GM12878 (cell line): ENCODE measurements at regions of chr3 and their contacts with region 1.

Region 1: GRCh38 chr3:53709860-53710674 is 136.2 kb downstream of the CHDH start:
- DNase-seq: no peak
- ATAC-seq: peak; percentile 96
- H3K4me3 ChIP-seq: no peak overlapping the region
- H3K27ac ChIP-seq: no peak overlapping the region
- H3K4me1 ChIP-seq: no peaks in the 10 kb centered on the region; the same call in 1 of the 2 replicates
- H3K27me3 ChIP-seq: no peaks in the 10 kb centered on the region
- CTCF ChIP-seq: peak; percentile 81 to 91 (median 82)
- EP300 ChIP-seq: no peak
- POLR2A ChIP-seq: no peak
- RAD21 ChIP-seq: peak; percentile 78

Region 2: DNA sequence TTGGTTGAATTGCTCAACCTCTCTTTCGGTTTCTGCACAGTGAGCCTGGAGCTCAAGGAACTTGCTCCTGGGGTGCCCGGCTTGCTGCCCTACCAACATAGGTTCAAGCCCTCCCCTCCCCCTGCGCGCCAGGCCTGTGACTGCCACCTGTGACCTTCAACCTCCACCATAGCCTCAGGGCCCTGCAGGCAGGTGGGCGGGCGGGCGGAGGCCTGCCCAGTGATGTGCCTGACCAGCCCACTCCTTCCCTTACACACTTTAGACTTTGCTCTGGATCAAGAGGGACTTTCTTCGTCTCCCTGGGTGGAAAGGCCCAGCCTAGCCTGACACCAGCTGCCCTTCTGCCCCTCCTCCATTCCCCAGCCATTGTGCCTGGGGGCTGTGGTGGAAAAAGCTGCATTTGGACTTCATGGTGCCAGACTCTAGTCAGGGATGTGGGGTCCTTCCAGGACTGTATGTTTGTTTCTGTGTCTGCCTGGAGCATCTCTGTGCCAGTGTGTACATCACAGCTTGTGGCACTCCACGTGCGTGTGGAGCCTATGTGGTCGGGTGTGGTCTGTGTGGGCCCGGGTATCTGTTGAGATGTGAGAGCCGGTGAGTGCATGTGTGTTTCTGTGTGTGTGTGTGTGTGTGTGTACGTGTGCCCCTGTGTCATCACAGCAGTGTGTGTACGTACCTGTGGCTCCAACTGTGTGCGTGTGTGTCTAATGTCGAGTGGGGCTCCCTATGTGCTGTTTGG is 539.6 kb before region 1 on chr3:
- CTCF ChIA-PET with region 1: no interaction called
- POLR2A ChIA-PET with region 1: no interaction called
- RAD21 ChIA-PET with region 1: no interaction called
- SMC1A ChIA-PET with region 1: no interaction called
- in situ Hi-C with region 1: no loop called
- intact Hi-C with region 1: no loop called
- DNase-seq: peak; percentile 66
- ATAC-seq: peak; percentile 67
- H3K4me3 ChIP-seq: peak overlapping the region; percentile 74
- H3K27ac ChIP-seq: peak overlapping the region; percentile 81
- H3K4me1 ChIP-seq: peaks cover 98% of the 10 kb centered on the region
- H3K27me3 ChIP-seq: no peaks in the 10 kb centered on the region
- CTCF ChIP-seq: no peak
- EP300 ChIP-seq: peak in 1 of 2 experiments; percentile 3; a peak in 1 of 4 replicates
- POLR2A ChIP-seq: peak; percentile 22; the same call in 1 of the 2 replicates
- RAD21 ChIP-seq: no peak

Region 3: GRCh38 chr3:53303957-53304356 is 406.1 kb before region 1 on chr3:
- CTCF ChIA-PET with region 1: interaction called, 5 read pairs
- POLR2A ChIA-PET with region 1: no interaction called
- RAD21 ChIA-PET with region 1: interaction called, 3 read pairs
- SMC1A ChIA-PET with region 1: interaction called, 3 read pairs
- in situ Hi-C with region 1: no loop called
- intact Hi-C with region 1: loop called (anchors 1 kb)
- DNase-seq: no peak
- ATAC-seq: no peak
- H3K4me3 ChIP-seq: no peak overlapping the region
- H3K27ac ChIP-seq: no peak overlapping the region
- H3K4me1 ChIP-seq: no peaks in the 10 kb centered on the region
- H3K27me3 ChIP-seq: no peaks in the 10 kb centered on the region
- CTCF ChIP-seq: no peak
- EP300 ChIP-seq: no peak
- POLR2A ChIP-seq: no peak
- RAD21 ChIP-seq: no peak

Region 4: DNA sequence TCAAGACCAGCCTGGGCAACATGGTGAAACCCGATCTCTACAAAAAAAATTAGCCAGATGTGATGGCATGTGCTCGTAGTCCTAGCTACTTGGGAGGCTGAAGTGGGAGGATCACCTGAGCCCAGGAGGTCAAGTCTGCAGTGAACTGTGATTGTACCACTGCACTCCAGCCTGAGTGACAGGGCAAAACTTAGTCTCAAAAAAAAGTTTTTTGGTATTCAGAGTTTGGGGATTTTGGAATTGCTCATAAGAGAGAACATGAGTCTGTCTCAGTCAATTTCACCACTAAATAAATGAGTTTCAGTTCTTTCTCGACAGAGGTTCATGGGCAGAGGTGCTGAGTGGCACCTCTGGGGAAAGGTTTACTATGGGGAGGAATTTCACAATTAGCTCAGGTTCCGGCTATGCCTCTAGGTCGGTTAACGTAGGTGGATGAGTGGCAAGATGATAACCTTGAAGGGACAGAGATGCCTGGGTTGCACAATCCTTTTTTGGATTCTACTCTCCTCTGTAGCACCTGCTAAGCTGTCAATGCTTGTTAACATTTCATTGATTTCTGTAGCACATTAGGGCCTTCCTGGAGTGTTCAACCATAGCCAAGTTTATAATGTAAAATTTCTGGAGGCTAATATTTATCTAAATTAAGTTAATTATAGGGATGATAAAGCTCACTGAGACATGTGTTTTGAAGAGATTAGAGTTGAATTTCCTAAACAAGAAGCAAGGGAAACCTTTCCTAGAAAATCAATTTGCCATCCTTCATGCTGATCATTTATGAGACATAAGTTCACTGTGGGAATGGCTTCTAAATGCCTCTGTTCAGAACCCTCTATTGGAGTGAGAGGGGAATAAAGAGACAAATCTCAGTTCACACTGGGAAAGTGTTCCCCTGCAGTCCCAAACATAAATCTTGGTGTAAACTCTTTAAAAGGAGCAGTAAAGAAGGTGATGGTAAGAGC is 325.3 kb before region 1 on chr3:
- CTCF ChIA-PET with region 1: interaction called, 10 read pairs
- POLR2A ChIA-PET with region 1: no interaction called
- RAD21 ChIA-PET with region 1: interaction called, 9 read pairs
- SMC1A ChIA-PET with region 1: interaction called, 5 read pairs
- in situ Hi-C with region 1: no loop called
- intact Hi-C with region 1: no loop called
- DNase-seq: peak; percentile 33
- ATAC-seq: peak; percentile 92
- H3K4me3 ChIP-seq: no peak overlapping the region
- H3K27ac ChIP-seq: no peak overlapping the region
- H3K4me1 ChIP-seq: no peaks in the 10 kb centered on the region
- H3K27me3 ChIP-seq: no peaks in the 10 kb centered on the region
- CTCF ChIP-seq: no peak
- EP300 ChIP-seq: peak in 1 of 2 experiments; percentile 10; a peak in 1 of 4 replicates
- POLR2A ChIP-seq: no peak
- RAD21 ChIP-seq: no peak

Region 5: GRCh38 chr3:53525765-53526703 is 184.0 kb before region 1 on chr3:
- CTCF ChIA-PET with region 1: interaction called, 13 read pairs
- POLR2A ChIA-PET with region 1: no interaction called
- RAD21 ChIA-PET with region 1: no interaction called
- SMC1A ChIA-PET with region 1: interaction called, 3 read pairs
- in situ Hi-C with region 1: no loop called
- intact Hi-C with region 1: loop called (anchors 5 kb)
- DNase-seq: no peak
- ATAC-seq: no peak
- H3K4me3 ChIP-seq: no peak overlapping the region
- H3K27ac ChIP-seq: no peak overlapping the region
- H3K4me1 ChIP-seq: no peaks in the 10 kb centered on the region
- H3K27me3 ChIP-seq: no peaks in the 10 kb centered on the region; a peak in 2 of 4 replicates
- CTCF ChIP-seq: no peak
- EP300 ChIP-seq: no peak
- POLR2A ChIP-seq: no peak
- RAD21 ChIP-seq: no peak

Region 6: DNA sequence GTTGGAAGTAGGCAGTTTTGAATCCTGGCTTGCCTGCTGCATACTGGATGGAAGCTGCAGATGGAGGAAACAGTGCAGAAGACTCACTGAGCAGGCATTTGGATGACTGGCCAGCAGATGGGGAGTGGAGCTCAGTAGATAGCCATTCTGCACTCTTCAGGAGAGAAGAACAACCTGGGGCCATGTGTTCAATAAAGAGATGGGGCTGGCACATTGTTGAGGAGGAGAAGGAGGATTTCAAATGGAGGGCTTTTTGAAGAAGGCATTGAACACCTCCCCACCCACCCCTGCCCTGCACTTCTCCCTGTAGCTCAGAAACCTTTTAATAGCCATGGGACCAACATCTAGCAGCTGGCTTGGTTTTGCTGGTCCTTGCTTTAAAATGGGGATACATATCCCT is 105.8 kb before region 1 on chr3:
- CTCF ChIA-PET with region 1: interaction called, 9 read pairs
- POLR2A ChIA-PET with region 1: no interaction called
- RAD21 ChIA-PET with region 1: no interaction called
- SMC1A ChIA-PET with region 1: interaction called, 3 read pairs
- in situ Hi-C with region 1: no loop called
- intact Hi-C with region 1: loop called (anchors 10 kb)
- DNase-seq: no peak
- ATAC-seq: no peak
- H3K4me3 ChIP-seq: no peak overlapping the region
- H3K27ac ChIP-seq: no peak overlapping the region
- H3K4me1 ChIP-seq: no peaks in the 10 kb centered on the region
- H3K27me3 ChIP-seq: no peaks in the 10 kb centered on the region
- CTCF ChIP-seq: 0 out of 6 replicates have a peak, but pooled peaks of 1 of the 3 experiments have one; percentile 5
- EP300 ChIP-seq: no peak
- POLR2A ChIP-seq: no peak
- RAD21 ChIP-seq: no peak

Region 7: GRCh38 chr3:53643757-53644156 is 66.3 kb before region 1 on chr3:
- CTCF ChIA-PET with region 1: interaction called, 18 read pairs
- POLR2A ChIA-PET with region 1: no interaction called
- RAD21 ChIA-PET with region 1: interaction called, 4 read pairs
- SMC1A ChIA-PET with region 1: interaction called, 8 read pairs
- in situ Hi-C with region 1: no loop called
- intact Hi-C with region 1: no loop called
- DNase-seq: no peak
- ATAC-seq: no peak
- H3K4me3 ChIP-seq: no peak overlapping the region
- H3K27ac ChIP-seq: no peak overlapping the region
- H3K4me1 ChIP-seq: no peaks in the 10 kb centered on the region
- H3K27me3 ChIP-seq: no peaks in the 10 kb centered on the region
- CTCF ChIP-seq: peak in 1 of 3 experiments; percentile 14; a peak in 1 of 6 replicates
- EP300 ChIP-seq: no peak
- POLR2A ChIP-seq: no peak
- RAD21 ChIP-seq: no peak

Region 8: GRCh38 chr3:53677413-53677812 is 32.7 kb before region 1 on chr3:
- CTCF ChIA-PET with region 1: interaction called, 10 read pairs
- POLR2A ChIA-PET with region 1: no interaction called
- RAD21 ChIA-PET with region 1: interaction called, 5 read pairs
- SMC1A ChIA-PET with region 1: interaction called, 14 read pairs
- in situ Hi-C with region 1: no loop called
- intact Hi-C with region 1: no loop called
- DNase-seq: no peak
- ATAC-seq: peak; percentile 35; the same call in 1 of the 3 replicates
- H3K4me3 ChIP-seq: no peak overlapping the region
- H3K27ac ChIP-seq: no peak overlapping the region
- H3K4me1 ChIP-seq: no peaks in the 10 kb centered on the region
- H3K27me3 ChIP-seq: no peaks in the 10 kb centered on the region
- CTCF ChIP-seq: peak; percentile 11 to 38 (median 34); a peak in 5 of 6 replicates
- EP300 ChIP-seq: no peak
- POLR2A ChIP-seq: no peak
- RAD21 ChIP-seq: 0 out of 2 replicates have a peak, but pooled peaks have one; percentile 6

Region 9: GRCh38 chr3:53816425-53816824 is 106.4 kb after region 1 on chr3:
- CTCF ChIA-PET with region 1: no interaction called
- POLR2A ChIA-PET with region 1: no interaction called
- RAD21 ChIA-PET with region 1: no interaction called
- SMC1A ChIA-PET with region 1: no interaction called
- in situ Hi-C with region 1: no loop called
- intact Hi-C with region 1: no loop called
- DNase-seq: no peak
- ATAC-seq: no peak
- H3K4me3 ChIP-seq: no peak overlapping the region
- H3K27ac ChIP-seq: no peak overlapping the region
- H3K4me1 ChIP-seq: no peaks in the 10 kb centered on the region
- H3K27me3 ChIP-seq: no peaks in the 10 kb centered on the region
- CTCF ChIP-seq: no peak
- EP300 ChIP-seq: no peak
- POLR2A ChIP-seq: no peak
- RAD21 ChIP-seq: no peak

Region 10: DNA sequence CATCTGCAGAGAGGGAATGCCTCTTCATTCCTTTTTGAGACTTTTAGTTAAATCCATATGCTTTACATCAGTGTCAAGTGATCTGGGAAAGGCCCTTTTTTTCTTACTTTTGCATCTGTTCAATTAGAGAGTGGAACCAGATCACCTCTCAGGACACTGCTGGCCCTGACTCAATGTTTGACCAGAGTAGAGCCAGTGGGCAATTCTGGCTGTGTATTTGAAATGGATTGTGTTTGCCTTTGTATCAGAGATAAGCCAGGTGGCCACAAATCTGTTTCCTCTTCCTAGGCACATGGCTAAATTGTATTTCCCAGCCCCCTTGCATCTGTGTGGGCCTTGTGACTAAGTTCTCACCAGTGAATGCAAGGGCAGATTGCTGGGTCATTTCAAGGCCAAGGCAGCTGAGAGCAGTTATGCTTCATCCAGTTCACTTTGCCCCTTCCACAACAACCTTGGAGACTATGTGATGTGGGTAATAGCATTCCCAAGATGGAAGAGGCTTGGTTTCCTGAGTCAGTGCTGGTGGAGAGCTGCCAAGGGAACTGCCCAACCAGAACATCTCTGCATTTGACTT is 336.7 kb after region 1 on chr3:
- CTCF ChIA-PET with region 1: no interaction called
- POLR2A ChIA-PET with region 1: no interaction called
- RAD21 ChIA-PET with region 1: no interaction called
- SMC1A ChIA-PET with region 1: no interaction called
- in situ Hi-C with region 1: no loop called
- intact Hi-C with region 1: no loop called
- DNase-seq: no peak
- ATAC-seq: no peak
- H3K4me3 ChIP-seq: no peak overlapping the region
- H3K27ac ChIP-seq: no peak overlapping the region
- H3K4me1 ChIP-seq: no peaks in the 10 kb centered on the region
- H3K27me3 ChIP-seq: no peaks in the 10 kb centered on the region; a peak in 1 of 4 replicates
- CTCF ChIP-seq: no peak
- EP300 ChIP-seq: no peak
- POLR2A ChIP-seq: no peak
- RAD21 ChIP-seq: no peak

Region 11: GRCh38 chr3:54494209-54494608 is 784.1 kb after region 1 on chr3:
- CTCF ChIA-PET with region 1: no interaction called
- POLR2A ChIA-PET with region 1: no interaction called
- RAD21 ChIA-PET with region 1: no interaction called
- SMC1A ChIA-PET with region 1: no interaction called
- in situ Hi-C with region 1: no loop called
- intact Hi-C with region 1: no loop called
- DNase-seq: no peak
- ATAC-seq: no peak
- H3K4me3 ChIP-seq: no peak overlapping the region
- H3K27ac ChIP-seq: no peak overlapping the region
- H3K4me1 ChIP-seq: no peaks in the 10 kb centered on the region
- H3K27me3 ChIP-seq: no peaks in the 10 kb centered on the region
- CTCF ChIP-seq: no peak
- EP300 ChIP-seq: no peak
- POLR2A ChIP-seq: no peak
- RAD21 ChIP-seq: no peak